ENCODE measurements at regions of chr1 and their contacts with region 1.

Region 1: GRCh38 chr1:147890177-147890790 is 12.3 kb upstream of the GJA8 start:
- DNase-seq: peak; percentile 85
- ATAC-seq: peak; percentile 91
- H3K4me3 Mint-ChIP-seq: no peak overlapping the region
- H3K27ac Mint-ChIP-seq: no peak overlapping the region
- H3K4me1 Mint-ChIP-seq: peaks cover 2% of the 10 kb centered on the region
- H3K27me3 Mint-ChIP-seq: no peaks in the 10 kb centered on the region

Region 2: DNA sequence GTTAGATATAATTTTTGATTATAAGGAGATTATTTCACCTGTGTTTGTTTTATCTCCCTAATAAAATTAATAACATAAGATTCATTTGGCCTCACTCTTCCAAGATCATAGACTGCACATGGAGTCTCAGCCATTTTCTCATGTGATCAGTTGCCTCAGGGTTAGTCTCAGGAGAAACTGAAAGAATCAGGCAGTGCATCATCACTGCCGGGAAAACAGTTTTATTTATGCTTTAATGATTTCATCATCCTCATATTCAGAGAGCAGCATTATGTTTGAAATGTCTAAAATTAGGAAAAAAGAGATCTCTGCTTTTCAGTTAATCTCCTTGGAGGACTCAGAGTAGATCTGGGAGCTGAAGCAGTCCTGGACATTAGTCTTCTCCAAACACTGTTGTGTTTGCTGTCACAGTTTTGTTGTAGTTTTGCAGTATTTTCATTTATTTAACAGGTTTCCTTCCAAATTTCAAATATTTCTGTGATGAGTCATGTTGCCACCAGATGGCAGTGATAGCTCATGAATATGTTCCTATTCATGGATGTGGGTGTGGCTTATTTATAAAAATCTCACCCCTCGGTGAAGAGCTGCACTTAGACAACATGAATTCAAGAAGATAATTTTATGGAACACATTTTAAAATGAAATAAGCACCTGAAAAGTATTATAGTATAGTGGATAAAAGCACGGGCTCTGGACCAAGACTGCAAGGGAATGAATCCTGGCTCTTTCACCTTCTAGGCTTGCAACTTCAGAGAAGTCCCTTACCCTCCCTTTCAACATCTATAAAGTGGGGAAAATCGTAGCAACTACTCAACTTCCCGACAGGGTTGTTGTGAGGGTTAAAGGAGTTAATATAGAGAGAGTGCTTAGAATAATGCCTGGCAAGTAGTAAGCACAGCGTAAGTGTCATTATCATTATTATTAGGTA is 616.6 kb before region 1 on chr1:
- CTCF ChIA-PET with region 1: interaction called, 11 read pairs
- POLR2A ChIA-PET with region 1: no interaction called
- intact Hi-C with region 1: loop called (anchors 1 to 10 kb)
- DNase-seq: peak; percentile 37
- ATAC-seq: peak; percentile 47
- H3K4me3 Mint-ChIP-seq: no peak overlapping the region
- H3K27ac Mint-ChIP-seq: no peak overlapping the region
- H3K4me1 Mint-ChIP-seq: peaks cover 6% of the 10 kb centered on the region
- H3K27me3 Mint-ChIP-seq: no peaks in the 10 kb centered on the region

Region 3: GRCh38 chr1:147509786-147510395 is 380.4 kb before region 1 on chr1:
- CTCF ChIA-PET with region 1: interaction called, 3 read pairs
- POLR2A ChIA-PET with region 1: no interaction called
- intact Hi-C with region 1: loop called in 1 of 2 experiments (anchors 5 kb)
- DNase-seq: no peak
- ATAC-seq: no peak
- H3K4me3 Mint-ChIP-seq: no peak overlapping the region
- H3K27ac Mint-ChIP-seq: no peak overlapping the region
- H3K4me1 Mint-ChIP-seq: no peaks in the 10 kb centered on the region
- H3K27me3 Mint-ChIP-seq: no peaks in the 10 kb centered on the region

Region 4: GRCh38 chr1:147723691-147724323 is 166.5 kb before region 1 on chr1:
- CTCF ChIA-PET with region 1: interaction called, 7 read pairs
- POLR2A ChIA-PET with region 1: no interaction called
- intact Hi-C with region 1: loop called (anchors 1 to 2 kb)
- DNase-seq: peak; percentile 41
- ATAC-seq: no peak
- H3K4me3 Mint-ChIP-seq: no peak overlapping the region
- H3K27ac Mint-ChIP-seq: no peak overlapping the region
- H3K4me1 Mint-ChIP-seq: no peaks in the 10 kb centered on the region
- H3K27me3 Mint-ChIP-seq: peaks cover 9% of the 10 kb centered on the region

Region 5: GRCh38 chr1:147902183-147902845 is 12.0 kb after region 1 on chr1 and contains the start of gene GJA8:
- CTCF ChIA-PET with region 1: interaction called, 15 read pairs
- POLR2A ChIA-PET with region 1: no interaction called
- intact Hi-C with region 1: no loop called
- DNase-seq: no peak
- ATAC-seq: no peak
- H3K4me3 Mint-ChIP-seq: no peak within 1 kb of the TSS
- H3K27ac Mint-ChIP-seq: no peak within 1 kb of the TSS
- H3K4me1 Mint-ChIP-seq: peaks cover 8% of the 10 kb centered on the region
- H3K27me3 Mint-ChIP-seq: peaks cover 4% of the 10 kb centered on the region
- total RNA-seq, gene GJA8: not detected